Brain microvascular endothelial cell (primary cell): ENCODE measurements at regions of chr4 and their contacts with region 1.

Region 1: DNA sequence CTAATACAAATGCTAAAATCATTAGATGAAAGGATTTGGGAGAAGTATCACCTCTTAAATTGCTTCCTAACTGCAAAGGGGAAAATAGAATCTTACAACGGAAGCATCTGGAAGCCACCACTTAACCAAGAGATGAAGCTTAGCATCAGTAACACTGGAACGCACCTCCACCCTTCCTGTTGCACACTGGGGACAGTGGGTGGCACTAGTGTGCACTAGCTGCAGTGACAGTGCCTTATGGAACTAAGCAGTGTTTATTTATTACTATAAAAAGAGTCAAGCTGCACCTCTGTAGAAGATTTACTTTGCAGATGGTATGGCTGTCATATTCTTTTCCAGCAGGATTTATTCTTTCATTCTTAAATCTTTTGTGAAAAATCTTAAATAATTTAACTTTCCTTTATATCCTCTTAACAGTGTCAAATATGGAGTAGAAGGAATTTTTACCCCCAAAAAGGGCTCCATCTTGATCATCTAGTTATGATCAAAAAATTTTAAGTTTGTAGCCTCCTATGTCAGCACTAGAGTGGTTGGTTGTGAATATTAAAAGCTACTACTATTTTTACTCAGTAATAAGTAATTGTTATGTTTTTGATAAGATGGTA is 76.7 kb downstream of the SCD5 start:
- DNase-seq: no peak
- H3K4me3 ChIP-seq: no peak overlapping the region
- H3K27ac ChIP-seq: no peak overlapping the region
- H3K27me3 ChIP-seq: no peaks in the 10 kb centered on the region
- CTCF ChIP-seq: peak; percentile 62

Region 2: DNA sequence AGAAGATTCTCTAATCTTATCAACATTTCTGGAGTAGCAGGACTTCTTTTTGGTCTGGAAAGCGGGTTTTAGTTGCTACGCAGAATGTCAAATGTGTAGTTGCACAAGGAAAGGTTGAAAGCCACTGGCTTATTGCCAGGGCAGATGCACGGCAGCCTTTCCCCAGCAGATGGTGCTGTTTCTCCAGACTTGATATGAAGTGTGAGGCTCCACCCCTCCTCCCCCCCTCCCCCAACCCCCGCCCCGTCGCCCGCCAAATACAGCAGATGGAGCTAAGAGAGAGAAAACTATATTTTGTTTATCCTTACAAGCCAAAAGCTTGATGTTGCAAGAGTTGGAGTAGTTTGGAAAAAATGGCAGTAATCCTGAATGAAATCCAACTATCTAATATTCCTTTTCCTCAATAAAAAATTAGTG is 259.5 kb before region 1 on chr4:
- in situ Hi-C with region 1: loop called (anchors 10 kb)
- DNase-seq: peak; percentile 89
- H3K4me3 ChIP-seq: no peak overlapping the region
- H3K27ac ChIP-seq: no peak overlapping the region
- H3K27me3 ChIP-seq: no peaks in the 10 kb centered on the region
- CTCF ChIP-seq: peak; percentile 82

Region 3: GRCh38 chr4:84070289-84070688 is 1348.4 kb after region 1 on chr4:
- in situ Hi-C with region 1: no loop called
- DNase-seq: no peak
- H3K4me3 ChIP-seq: no peak overlapping the region
- H3K27ac ChIP-seq: no peak overlapping the region
- H3K27me3 ChIP-seq: no peaks in the 10 kb centered on the region
- CTCF ChIP-seq: no peak